ENCODE measurements at regions of chr16 and their contacts with region 1.

Region 1: DNA sequence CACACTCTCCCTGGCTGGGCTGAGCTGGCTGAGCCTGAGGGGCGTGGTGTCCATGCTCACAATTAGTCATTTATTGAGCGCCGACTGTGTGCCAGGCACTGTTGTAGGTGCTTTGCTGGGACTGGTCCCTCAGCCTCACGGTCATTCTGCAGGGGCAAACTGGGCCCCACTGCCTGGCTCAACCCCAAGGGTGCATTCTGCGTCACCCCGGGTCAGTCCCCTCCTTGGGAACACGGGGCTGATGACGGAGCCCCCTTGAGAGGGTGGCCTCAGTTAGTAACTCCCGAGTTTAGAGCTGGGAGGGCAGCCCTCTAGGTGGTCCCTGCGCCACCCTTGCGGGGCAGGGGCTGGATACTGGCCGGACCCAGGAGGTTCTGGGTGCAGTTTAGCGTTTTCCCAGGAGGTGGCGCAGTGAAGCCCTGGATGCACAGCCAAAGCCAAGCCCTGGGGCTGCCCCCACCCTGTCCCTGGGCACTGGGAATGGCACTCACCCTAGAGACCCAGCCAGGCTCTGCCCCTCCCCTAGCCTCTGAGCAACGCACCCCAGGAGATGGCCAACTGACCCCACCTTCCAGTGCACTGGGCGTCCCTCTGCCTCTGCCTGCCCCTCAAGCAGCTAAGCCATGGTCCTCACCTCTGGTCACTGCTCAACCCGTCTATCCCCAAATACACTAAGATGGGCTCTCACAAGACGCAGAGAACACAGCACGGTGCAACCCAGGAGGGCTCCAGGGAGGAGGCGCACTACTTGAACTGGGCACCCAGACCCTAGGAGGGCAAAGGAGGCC is 243.2 kb upstream of the GSE1 start:
- DNase-seq: peak; percentile 76
- H3K4me3 Mint-ChIP-seq: peak overlapping the region; percentile 60
- H3K27ac Mint-ChIP-seq: no peak overlapping the region
- H3K4me1 Mint-ChIP-seq: peaks cover 61% of the 10 kb centered on the region
- H3K27me3 Mint-ChIP-seq: no peaks in the 10 kb centered on the region
- CTCF ChIP-seq: peak; percentile 83

Region 2: DNA sequence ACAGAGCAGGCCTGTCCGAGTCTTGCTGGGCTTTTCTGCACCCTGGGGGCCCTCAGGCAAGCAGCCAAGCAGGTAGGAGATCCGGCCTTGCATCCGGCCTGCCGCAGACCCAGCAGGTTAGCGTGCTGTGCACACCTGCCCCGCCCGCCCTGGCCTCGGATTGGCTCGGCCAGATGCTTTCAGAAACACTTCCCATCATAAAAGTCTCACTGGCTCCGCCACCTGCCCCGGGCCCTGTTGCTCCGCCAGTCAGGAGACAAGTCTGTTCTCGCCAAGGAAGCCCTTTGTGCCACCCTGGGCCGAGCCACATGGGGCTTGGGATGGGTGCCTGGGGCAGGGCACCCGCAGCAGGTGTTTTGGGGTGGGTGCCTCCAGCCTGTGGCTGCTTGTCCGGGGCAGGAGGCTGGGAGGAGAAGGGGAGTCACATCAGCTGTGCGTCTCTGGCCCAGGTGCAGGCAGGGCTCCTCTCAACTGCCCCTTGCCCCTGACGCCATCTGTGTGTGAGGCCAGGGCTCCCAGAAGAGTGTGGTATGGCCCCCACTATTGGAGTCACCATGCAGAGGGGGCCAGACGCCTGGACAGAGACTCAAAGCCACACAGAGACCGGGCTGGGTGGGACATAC is 15.0 kb after region 1 on chr16:
- CTCF ChIA-PET with region 1: interaction called, 4 read pairs
- POLR2A ChIA-PET with region 1: interaction called, 19 read pairs
- intact Hi-C with region 1: no loop called
- DNase-seq: peak; percentile 91
- H3K4me3 Mint-ChIP-seq: peak overlapping the region; percentile 21
- H3K27ac Mint-ChIP-seq: no peak overlapping the region
- H3K4me1 Mint-ChIP-seq: peaks cover 19% of the 10 kb centered on the region
- H3K27me3 Mint-ChIP-seq: no peaks in the 10 kb centered on the region
- CTCF ChIP-seq: no peak

Region 3: DNA sequence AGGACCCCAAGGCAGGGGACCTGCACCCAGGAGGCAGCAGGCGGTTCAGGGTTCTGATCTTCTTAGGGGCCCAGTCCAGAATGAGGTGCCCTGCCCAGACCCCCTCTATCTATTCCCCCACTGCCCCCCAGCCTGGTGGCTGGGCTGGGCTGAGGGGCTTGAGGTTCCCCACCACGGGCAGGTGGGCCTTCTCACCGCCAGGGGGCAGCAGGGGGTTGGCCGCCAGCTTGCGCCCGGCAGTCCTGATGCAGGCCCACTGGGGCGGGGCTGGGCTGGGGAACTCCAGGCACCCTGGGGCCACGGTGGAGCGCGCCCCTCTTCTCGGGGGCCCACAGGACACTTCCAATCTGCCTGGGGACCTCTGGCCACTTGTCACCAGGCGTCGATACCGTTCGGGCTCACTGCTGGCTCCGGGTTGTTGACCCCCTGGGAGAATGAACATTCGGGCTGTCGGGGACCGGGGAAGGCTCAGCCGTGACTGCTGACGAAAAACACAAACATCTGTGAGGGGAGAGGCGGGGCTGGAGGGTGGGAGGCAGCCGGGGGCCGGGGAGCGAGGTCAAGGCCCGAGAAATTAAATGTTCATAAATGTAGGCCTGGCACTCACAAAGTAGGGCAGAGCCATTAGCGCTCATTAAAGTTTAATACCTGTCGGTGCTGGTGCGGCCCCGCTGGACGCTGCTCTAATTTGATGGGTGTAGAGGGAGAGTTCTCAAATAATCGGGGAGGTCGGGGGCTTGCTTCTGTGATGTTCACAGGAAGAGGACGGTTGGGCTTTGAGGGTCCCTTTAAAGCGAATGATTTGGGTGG is 23.9 kb after region 1 on chr16:
- CTCF ChIA-PET with region 1: interaction called, 50 read pairs
- POLR2A ChIA-PET with region 1: interaction called, 30 read pairs
- intact Hi-C with region 1: loop called (anchors 1 kb)
- DNase-seq: no peak
- H3K4me3 Mint-ChIP-seq: no peak overlapping the region
- H3K27ac Mint-ChIP-seq: no peak overlapping the region
- H3K4me1 Mint-ChIP-seq: peaks cover 47% of the 10 kb centered on the region
- H3K27me3 Mint-ChIP-seq: no peaks in the 10 kb centered on the region
- CTCF ChIP-seq: peak; percentile 44

Region 4: DNA sequence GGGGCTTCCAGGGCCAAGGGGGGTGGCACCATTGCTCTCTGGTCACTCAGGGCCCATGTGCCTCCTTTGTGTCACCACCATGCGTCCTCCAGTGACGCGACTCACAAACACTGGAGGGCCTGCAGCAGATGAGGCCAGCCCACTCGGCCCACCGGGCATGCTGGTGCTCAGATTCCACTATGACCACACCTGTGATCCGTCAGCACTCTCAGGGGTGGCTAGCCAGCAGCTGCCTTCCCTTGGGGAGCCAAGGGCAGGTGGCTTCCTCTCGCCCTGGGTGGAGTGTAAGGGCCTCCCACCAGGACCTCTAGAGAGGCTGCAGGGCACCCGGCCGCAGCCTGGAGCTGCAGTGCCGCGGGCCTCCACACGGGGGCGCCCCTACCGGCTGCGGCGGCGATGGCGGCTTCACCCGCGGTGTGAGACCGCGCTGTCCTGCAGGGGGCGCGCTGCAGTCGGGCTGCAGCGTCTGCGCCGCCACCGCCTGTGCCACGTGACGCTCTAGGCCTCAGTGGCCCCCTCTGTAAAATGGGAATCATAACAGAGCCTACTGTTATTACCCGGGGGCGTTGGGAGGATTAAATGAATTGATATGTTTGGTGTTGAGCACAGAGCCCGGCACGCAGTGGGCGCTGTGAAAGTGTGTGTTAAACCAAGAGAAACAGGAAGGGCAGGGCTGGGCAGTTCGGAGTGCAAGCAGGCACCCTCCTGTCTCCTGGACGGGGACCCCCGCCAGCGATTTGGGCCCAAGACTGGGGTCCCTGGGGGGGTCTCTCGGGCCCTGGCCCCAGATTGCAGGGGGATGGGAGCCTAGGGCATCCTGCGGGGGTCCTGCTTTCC is 50.8 kb after region 1 on chr16:
- CTCF ChIA-PET with region 1: interaction called, 3 read pairs
- POLR2A ChIA-PET with region 1: no interaction called
- intact Hi-C with region 1: loop called (anchors 2 kb)
- DNase-seq: peak; percentile 38
- H3K4me3 Mint-ChIP-seq: no peak overlapping the region
- H3K27ac Mint-ChIP-seq: no peak overlapping the region
- H3K4me1 Mint-ChIP-seq: no peaks in the 10 kb centered on the region
- H3K27me3 Mint-ChIP-seq: no peaks in the 10 kb centered on the region
- CTCF ChIP-seq: peak; percentile 99